PC-9 (cell line): ENCODE measurements at regions of chr2 and their contacts with region 1.

Region 1: DNA sequence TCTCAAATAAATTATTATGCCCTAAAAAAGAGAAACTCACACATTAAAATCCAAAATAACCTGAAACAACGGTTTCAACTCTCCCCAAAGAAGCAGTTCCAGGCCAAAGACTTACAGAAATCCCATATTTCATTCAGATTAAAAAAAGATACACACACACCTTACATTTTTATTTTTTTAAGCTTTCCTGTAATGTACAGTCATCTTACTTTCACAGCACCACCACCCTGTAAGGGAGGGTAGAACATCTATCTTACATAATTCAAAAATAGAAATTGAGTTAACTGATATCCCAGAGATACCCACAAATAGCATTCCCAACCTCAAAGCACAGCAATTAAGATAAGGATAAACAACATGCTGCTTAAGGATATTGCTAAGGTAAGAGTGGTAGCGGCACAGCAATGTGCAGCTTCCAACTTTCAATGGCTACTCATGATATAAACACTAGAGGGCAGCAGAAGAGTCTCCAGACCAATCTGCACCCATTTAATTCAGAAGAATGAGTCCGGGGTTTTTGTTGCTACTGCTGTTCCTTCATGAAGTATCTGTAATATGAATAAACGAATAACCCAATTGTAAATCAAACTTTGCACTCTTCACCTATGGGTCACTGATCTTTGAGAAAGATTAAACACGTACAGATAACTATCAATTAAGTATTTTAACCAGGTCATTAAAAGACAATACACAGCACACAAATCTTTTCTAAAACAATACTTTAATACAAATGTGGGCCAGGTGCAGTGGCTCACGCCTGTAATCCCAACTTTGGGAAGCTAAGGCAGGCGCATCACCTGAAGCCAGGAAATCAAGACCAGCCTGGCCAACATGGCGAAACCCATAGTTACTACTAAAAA is 11.3 kb downstream of the GFPT1 start:
- DNase-seq: no peak
- H3K4me3 ChIP-seq: no peak overlapping the region
- H3K27ac ChIP-seq: no peak overlapping the region
- H3K4me1 ChIP-seq: peaks cover 2% of the 10 kb centered on the region; the same call in 1 of the 2 replicates
- H3K27me3 ChIP-seq: no peaks in the 10 kb centered on the region
- CTCF ChIP-seq: peak; percentile 65

Region 2: GRCh38 chr2:69386789-69387734 is 11.3 kb after region 1 on chr2 and contains the start of gene GFPT1:
- CTCF ChIA-PET with region 1: interaction called, 10 read pairs
- POLR2A ChIA-PET with region 1: no interaction called
- intact Hi-C with region 1: no loop called
- DNase-seq: peak; percentile 83 to 96
- H3K4me3 ChIP-seq: peak within 1 kb of the TSS; percentile 90
- H3K27ac ChIP-seq: peak within 1 kb of the TSS; percentile 76
- H3K4me1 ChIP-seq: peaks cover 42% of the 10 kb centered on the region
- H3K27me3 ChIP-seq: no peaks in the 10 kb centered on the region
- CTCF ChIP-seq: no peak
- total RNA-seq, gene GFPT1: 58.3 and 60.2 TPM in 2 replicates